Mammary epithelial cell (primary cell): ENCODE measurements at regions of chr11 and their contacts with region 1.

Region 1: GRCh38 chr11:13868710-13869397 is 93.7 kb upstream of the SPON1 start:
- DNase-seq: peak; percentile 76
- H3K4me3 ChIP-seq: no peak overlapping the region
- H3K27ac ChIP-seq: no peak overlapping the region
- H3K4me1 ChIP-seq: peaks cover 19% of the 10 kb centered on the region
- H3K27me3 ChIP-seq: peaks cover 4% of the 10 kb centered on the region
- CTCF ChIP-seq: no peak

Region 2: GRCh38 chr11:13818325-13818724 is 50.5 kb before region 1 on chr11:
- CTCF ChIA-PET with region 1: no interaction called
- dilution Hi-C with region 1: no loop called
- in situ Hi-C with region 1: no loop called
- intact Hi-C with region 1: no loop called
- DNase-seq: no peak
- H3K4me3 ChIP-seq: no peak overlapping the region
- H3K27ac ChIP-seq: no peak overlapping the region
- H3K4me1 ChIP-seq: no peaks in the 10 kb centered on the region
- H3K27me3 ChIP-seq: peaks cover 6% of the 10 kb centered on the region
- CTCF ChIP-seq: no peak

Region 3: GRCh38 chr11:13942983-13943382 is 74.1 kb after region 1 on chr11:
- CTCF ChIA-PET with region 1: no interaction called
- dilution Hi-C with region 1: no loop called
- in situ Hi-C with region 1: no loop called
- intact Hi-C with region 1: loop called (anchors 1 kb)
- DNase-seq: peak; percentile 71
- H3K4me3 ChIP-seq: no peak overlapping the region
- H3K27ac ChIP-seq: peak overlapping the region; percentile 9
- H3K4me1 ChIP-seq: peaks cover 47% of the 10 kb centered on the region
- H3K27me3 ChIP-seq: no peaks in the 10 kb centered on the region
- CTCF ChIP-seq: no peak

Region 4: DNA sequence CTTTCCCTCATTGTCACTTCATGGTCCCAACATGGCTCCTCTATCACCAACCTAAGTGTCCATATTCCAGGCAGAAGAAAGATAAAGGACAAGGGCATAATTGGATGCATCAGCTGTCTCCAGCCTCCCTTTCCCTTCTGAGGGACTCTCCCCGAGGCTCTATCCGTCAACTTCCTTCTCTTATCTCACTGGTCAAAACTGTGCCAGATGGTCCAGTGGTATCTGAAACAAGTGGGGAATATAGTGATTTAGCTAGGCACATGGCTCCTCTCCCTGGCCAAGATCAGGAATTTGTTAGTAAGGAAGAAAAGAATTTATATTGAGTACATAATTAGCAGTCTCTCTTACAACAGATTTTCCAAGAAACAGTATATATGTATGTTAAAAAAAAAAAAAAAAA is 81.0 kb after region 1 on chr11:
- CTCF ChIA-PET with region 1: interaction called, 4 read pairs
- dilution Hi-C with region 1: no loop called
- in situ Hi-C with region 1: no loop called
- intact Hi-C with region 1: loop called (anchors 1 kb)
- DNase-seq: no peak
- H3K4me3 ChIP-seq: no peak overlapping the region
- H3K27ac ChIP-seq: no peak overlapping the region
- H3K4me1 ChIP-seq: no peaks in the 10 kb centered on the region
- H3K27me3 ChIP-seq: peaks cover 2% of the 10 kb centered on the region
- CTCF ChIP-seq: peak in 1 of 2 donors; percentile 18

Region 5: DNA sequence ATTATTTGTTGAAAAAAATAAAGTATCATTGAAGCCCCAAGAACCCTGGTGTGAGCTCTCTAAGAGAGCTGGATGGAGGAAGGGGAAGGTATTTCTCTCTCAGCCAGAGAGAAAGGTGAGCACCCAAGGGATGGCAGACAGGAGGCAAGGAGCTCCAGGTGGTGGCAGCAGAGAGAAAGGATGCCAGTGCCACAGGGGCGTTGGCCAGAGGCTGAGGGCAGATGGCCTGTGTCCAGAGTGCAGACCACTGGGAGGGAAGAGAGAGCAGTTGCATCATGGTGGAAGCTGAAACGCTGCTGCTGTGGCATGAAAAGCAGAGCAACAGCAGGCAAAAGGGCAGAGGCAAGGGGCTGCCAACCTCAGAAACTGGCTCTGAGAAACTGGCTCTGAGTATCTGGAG is 102.1 kb after region 1 on chr11:
- CTCF ChIA-PET with region 1: no interaction called
- dilution Hi-C with region 1: no loop called
- in situ Hi-C with region 1: no loop called
- intact Hi-C with region 1: no loop called
- DNase-seq: peak; percentile 23
- H3K4me3 ChIP-seq: no peak overlapping the region
- H3K27ac ChIP-seq: no peak overlapping the region
- H3K4me1 ChIP-seq: no peaks in the 10 kb centered on the region
- H3K27me3 ChIP-seq: peaks cover 8% of the 10 kb centered on the region
- CTCF ChIP-seq: peak; percentile 75 to 93

Region 6: DNA sequence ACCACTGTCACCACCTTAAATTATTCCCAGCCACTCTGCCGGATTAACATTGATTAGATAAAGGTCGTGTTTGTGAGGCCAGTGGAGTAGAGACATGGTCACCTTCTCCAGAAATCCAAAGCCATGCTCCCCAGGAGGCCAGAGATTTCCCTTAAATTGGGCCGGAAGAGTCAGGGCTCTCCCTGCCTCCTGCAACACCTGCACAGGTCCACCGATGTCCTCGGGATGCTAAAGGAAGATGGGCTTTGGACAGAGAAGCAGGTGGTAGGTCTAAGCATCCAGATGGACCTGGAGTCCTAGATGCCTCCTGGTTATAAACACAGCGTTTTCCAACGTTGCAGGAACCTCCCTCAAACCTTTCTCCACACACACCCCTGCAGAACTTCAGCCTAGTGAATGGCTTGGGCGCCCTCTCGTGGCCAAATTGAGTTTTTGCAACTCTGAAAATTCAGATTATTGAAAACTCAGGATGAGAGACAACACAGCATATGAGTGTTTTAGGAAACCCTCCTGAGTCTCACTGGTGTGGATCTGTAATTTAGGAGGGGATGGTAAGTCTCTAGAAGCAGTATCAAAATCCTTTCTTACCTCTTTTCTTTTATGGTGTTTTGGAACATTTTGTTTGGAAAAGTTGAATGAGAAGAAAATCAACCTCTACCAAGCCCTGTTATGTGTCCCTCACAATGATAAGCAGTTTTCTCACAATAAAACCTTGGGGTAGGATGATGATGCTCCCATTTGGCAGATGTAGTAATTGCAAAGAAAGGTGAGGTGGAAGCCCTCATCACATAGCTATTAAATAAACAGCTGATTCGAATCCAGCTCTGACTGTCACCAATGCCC is 380.5 kb after region 1 on chr11:
- CTCF ChIA-PET with region 1: no interaction called
- dilution Hi-C with region 1: no loop called
- in situ Hi-C with region 1: no loop called
- intact Hi-C with region 1: loop called (anchors 2 kb)
- DNase-seq: peak; percentile 36
- H3K4me3 ChIP-seq: no peak overlapping the region
- H3K27ac ChIP-seq: no peak overlapping the region
- H3K4me1 ChIP-seq: no peaks in the 10 kb centered on the region
- H3K27me3 ChIP-seq: peaks cover 3% of the 10 kb centered on the region
- CTCF ChIP-seq: peak; percentile 70 to 85

Region 7: DNA sequence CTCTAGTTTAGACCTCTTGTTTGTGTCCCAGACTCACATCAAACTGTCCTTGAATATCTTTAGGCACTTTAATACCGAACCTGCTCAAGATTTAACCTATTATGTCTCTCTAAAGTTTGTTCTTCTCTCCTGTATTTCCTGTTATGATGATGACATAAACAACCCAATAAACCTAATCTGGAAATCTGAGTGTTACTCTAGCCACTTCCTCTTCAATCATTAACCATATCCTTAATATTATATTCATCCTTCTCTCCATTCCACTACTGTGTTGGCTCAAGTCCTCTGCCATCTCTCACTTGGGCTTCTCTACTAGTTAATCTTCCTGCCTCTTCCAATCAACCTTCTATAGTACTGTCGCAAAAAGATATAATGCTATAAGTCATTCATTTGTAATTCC is 594.8 kb after region 1 on chr11:
- CTCF ChIA-PET with region 1: no interaction called
- dilution Hi-C with region 1: no loop called
- in situ Hi-C with region 1: no loop called
- intact Hi-C with region 1: no loop called
- DNase-seq: no peak
- H3K4me3 ChIP-seq: no peak overlapping the region
- H3K27ac ChIP-seq: no peak overlapping the region
- H3K4me1 ChIP-seq: no peaks in the 10 kb centered on the region
- H3K27me3 ChIP-seq: no peaks in the 10 kb centered on the region
- CTCF ChIP-seq: no peak